Activated naive CD4-positive, alpha-beta T cell treated with anti-CD3 and anti-CD28 coated beads for 36 hours (primary cell): ENCODE measurements at regions of chr7 and their contacts with region 1.

Region 1: DNA sequence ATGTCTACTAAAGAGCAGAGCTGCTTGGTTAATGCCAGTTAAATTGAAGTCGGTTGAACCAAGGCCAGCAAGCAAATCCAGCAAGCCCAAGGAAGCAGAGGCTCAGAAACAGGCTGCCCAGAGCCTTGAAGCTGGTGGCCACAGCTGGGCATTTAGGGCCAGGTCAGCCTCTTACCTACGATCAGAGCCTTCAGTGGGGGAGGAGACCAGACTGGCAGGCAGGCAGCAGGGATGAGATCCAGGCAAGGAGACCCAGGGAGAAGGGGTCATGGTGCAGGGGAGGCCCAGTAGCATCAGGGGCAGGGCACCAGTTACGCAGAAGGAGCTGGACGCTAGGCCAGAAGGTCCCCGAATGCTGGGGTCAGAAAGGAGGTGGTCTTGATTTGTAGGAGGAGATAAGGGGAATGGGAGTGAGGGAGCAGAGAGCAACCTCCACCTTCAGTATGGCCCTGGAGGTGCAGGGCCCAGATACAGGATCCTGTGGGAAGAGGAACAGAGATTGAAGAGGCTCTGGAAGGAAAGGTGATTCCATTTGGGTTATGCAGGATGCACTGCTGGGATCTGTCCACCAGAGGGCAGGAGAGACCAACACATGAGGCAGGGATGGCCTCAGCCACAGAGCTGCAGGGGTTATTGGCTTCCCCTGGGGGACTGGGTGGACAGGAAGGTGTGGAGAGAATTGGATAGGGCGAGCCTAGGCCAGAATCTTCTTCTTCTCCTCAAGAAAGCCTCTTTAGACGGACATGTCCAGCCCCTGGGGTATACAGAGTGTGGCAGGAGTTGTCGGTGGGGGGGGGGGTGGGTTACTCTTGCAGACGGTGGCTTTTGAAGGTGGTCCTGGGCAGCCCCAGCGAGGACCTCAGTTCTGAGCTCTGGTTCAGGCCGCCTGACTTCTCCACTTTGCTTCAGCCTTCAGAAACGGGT is 132.6 kb upstream of the PODXL start:
- DNase-seq: peak; percentile 74
- H3K4me3 Mint-ChIP-seq: no peak overlapping the region
- H3K27ac Mint-ChIP-seq: no peak overlapping the region
- H3K4me1 Mint-ChIP-seq: no peaks in the 10 kb centered on the region
- H3K27me3 Mint-ChIP-seq: peaks cover 40% of the 10 kb centered on the region

Region 2: GRCh38 chr7:130845581-130846085 is 843.4 kb before region 1 on chr7:
- CTCF ChIA-PET with region 1: no interaction called
- intact Hi-C with region 1: no loop called
- DNase-seq: no peak
- H3K4me3 Mint-ChIP-seq: no peak overlapping the region
- H3K27ac Mint-ChIP-seq: no peak overlapping the region
- H3K4me1 Mint-ChIP-seq: peaks cover 13% of the 10 kb centered on the region
- H3K27me3 Mint-ChIP-seq: peaks cover 28% of the 10 kb centered on the region

Region 3: DNA sequence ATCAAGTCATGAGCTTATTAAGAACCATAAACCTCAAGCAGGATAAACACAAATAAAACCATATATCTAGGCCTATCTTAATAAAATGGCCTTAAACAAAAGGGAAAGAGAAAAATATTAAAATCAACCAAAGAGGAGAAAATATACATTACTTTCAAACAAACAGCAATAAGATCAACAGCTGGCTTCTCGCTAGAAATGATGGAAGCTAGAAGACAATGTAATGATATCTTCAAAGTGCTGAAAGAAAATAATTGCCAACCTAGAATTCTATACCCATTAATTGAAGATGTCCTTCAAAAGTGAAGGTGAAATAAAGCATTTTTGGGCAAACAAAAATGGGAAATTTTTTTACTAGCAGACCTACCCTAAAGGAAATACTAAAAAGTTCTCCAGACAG is 10.3 kb after region 1 on chr7:
- CTCF ChIA-PET with region 1: interaction called, 13 read pairs
- intact Hi-C with region 1: no loop called
- DNase-seq: no peak
- H3K4me3 Mint-ChIP-seq: no peak overlapping the region
- H3K27ac Mint-ChIP-seq: no peak overlapping the region
- H3K4me1 Mint-ChIP-seq: no peaks in the 10 kb centered on the region
- H3K27me3 Mint-ChIP-seq: peaks cover 2% of the 10 kb centered on the region

Region 4: GRCh38 chr7:131859147-131859821 is 170.3 kb after region 1 on chr7:
- CTCF ChIA-PET with region 1: interaction called, 3 read pairs
- intact Hi-C with region 1: loop called (anchors 1 kb)
- DNase-seq: peak; percentile 62
- H3K4me3 Mint-ChIP-seq: no peak overlapping the region
- H3K27ac Mint-ChIP-seq: no peak overlapping the region
- H3K4me1 Mint-ChIP-seq: no peaks in the 10 kb centered on the region
- H3K27me3 Mint-ChIP-seq: peaks cover 5% of the 10 kb centered on the region

Region 5: DNA sequence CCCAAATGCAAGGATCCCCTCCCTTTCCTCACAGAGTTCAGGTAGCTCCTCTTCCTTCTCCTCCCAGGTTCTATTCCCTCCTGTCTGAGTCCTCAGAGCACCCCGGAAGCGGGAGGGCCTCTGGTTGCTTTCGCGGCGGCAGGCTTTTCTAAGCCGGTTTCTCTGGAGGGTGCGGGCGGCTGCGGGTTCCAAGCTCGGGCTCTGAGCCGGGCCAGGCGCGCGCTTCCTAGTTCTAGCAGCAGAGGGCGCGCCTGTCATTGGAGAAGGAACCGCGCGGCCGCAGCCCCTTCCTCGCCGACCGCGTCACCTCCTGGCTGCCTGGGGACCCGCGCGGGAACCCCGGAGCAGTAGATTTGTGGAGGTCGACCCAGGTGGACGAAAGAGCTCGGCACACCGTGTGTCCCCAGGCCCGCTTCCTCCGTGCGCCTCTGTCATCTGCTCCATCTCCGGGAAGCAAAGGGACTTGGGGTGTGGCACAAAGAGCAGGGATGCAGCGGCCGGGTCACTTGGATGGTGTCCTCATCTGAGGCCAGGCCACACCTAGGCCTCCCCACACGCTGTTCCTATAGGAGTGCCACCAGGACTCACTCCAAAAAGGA is 256.4 kb after region 1 on chr7:
- CTCF ChIA-PET with region 1: no interaction called
- intact Hi-C with region 1: loop called (anchors 10 kb)
- DNase-seq: peak; percentile 44
- H3K4me3 Mint-ChIP-seq: no peak overlapping the region
- H3K27ac Mint-ChIP-seq: no peak overlapping the region
- H3K4me1 Mint-ChIP-seq: no peaks in the 10 kb centered on the region
- H3K27me3 Mint-ChIP-seq: peaks cover 30% of the 10 kb centered on the region

Region 6: GRCh38 chr7:132049462-132050304 is 360.7 kb after region 1 on chr7:
- CTCF ChIA-PET with region 1: interaction called, 6 read pairs
- intact Hi-C with region 1: loop called (anchors 1 kb)
- DNase-seq: peak; percentile 57
- H3K4me3 Mint-ChIP-seq: no peak overlapping the region
- H3K27ac Mint-ChIP-seq: no peak overlapping the region
- H3K4me1 Mint-ChIP-seq: no peaks in the 10 kb centered on the region
- H3K27me3 Mint-ChIP-seq: peaks cover 14% of the 10 kb centered on the region

Region 7: DNA sequence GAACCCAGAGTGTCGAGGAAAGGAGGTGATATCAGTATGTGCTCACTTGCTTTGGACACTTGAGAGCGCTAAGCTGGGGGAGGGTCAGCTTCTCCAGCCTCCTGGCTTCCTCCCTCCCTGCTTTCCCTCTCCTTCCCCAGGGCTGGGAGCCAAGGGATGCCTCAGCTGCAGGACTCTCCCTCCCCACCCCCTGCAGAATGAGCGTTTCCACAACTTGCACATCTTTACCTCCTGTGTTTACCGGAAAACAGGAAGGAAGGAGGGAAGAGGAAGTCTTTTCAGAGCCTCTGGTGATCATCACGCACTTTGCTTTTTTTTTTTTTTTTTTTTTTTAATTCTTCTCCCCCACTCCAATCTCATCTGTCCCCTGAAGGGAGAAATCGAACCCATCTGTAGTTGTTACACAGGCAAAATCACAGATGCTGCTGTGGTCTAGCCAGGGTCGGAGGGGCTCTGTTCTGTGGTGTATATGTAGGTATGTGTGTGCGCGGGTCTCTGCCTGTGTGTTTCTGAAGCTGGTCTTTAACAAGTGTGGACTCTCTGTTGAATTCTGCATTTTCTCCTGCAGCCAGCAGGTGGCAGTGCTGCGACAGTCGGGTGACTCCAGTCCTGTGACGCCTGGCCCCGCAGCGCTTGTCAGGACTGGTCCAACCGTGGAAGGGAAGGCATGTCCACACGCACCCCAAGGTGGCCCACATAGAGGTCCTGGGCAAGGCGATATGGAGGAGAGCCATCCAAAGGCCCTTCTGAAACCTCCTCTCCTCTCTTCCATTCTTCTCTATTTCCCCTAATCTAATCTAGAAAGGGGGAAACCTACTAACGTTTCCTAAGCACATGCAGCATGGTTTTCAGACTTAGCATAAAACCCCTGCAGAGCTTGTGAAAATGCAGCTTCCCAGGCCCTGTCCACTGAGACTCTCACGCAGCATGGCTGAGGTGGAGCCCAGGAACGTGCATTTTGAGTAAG is 629.6 kb after region 1 on chr7:
- CTCF ChIA-PET with region 1: interaction called, 6 read pairs
- intact Hi-C with region 1: loop called (anchors 10 kb)
- DNase-seq: peak; percentile 83
- H3K4me3 Mint-ChIP-seq: no peak overlapping the region
- H3K27ac Mint-ChIP-seq: no peak overlapping the region
- H3K4me1 Mint-ChIP-seq: peaks cover 10% of the 10 kb centered on the region
- H3K27me3 Mint-ChIP-seq: peaks cover 39% of the 10 kb centered on the region

Region 8: DNA sequence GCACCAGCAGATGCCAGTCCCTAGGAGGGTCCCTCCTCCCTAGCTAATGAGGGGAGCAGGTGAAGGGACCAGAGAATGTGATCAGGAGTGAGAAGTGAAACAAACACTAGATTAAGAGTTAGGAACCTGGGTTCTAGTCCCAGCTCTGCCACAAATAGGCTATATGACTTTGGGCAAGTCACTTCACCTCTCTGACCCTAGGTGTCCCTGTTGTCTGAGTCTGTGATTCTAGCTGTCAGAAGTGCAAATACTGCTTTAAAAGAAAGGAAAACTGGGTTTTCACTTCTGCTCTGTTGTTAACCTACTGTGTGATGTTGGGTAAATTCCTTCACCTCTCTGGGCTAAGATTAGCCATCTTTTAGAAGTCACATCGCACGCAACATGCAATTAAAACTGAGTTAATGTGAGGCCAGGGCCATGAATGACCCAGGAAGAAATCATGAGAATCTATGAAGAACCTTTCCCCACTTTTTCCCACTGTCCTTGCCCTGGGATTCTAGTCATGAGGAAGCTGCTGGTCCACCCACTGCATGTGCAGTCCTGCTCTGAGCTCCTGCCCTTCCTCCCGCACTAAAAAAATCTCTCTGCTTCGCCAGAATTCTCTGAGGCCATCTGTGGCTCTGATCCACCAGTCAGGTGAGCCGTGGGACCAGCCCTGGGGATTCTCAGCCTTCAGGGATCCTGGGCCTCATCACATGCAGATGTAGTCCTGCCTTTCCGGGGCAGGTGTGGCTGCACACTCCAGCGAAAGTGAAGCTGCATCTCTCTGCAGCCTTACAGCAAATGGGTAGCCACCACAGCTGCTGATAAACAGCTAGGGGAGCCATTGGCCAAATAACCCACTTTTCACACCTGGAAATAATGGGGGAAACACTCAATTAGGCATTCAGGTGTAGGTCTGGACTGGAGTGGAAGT is 705.5 kb after region 1 on chr7:
- CTCF ChIA-PET with region 1: no interaction called
- intact Hi-C with region 1: loop called (anchors 5 kb)
- DNase-seq: peak; percentile 43
- H3K4me3 Mint-ChIP-seq: no peak overlapping the region
- H3K27ac Mint-ChIP-seq: no peak overlapping the region
- H3K4me1 Mint-ChIP-seq: peaks cover 5% of the 10 kb centered on the region
- H3K27me3 Mint-ChIP-seq: peaks cover 2% of the 10 kb centered on the region